CD8-positive, alpha-beta memory T cell (primary cell): ENCODE measurements at regions of chr21 and their contacts with region 1.

Region 1: DNA sequence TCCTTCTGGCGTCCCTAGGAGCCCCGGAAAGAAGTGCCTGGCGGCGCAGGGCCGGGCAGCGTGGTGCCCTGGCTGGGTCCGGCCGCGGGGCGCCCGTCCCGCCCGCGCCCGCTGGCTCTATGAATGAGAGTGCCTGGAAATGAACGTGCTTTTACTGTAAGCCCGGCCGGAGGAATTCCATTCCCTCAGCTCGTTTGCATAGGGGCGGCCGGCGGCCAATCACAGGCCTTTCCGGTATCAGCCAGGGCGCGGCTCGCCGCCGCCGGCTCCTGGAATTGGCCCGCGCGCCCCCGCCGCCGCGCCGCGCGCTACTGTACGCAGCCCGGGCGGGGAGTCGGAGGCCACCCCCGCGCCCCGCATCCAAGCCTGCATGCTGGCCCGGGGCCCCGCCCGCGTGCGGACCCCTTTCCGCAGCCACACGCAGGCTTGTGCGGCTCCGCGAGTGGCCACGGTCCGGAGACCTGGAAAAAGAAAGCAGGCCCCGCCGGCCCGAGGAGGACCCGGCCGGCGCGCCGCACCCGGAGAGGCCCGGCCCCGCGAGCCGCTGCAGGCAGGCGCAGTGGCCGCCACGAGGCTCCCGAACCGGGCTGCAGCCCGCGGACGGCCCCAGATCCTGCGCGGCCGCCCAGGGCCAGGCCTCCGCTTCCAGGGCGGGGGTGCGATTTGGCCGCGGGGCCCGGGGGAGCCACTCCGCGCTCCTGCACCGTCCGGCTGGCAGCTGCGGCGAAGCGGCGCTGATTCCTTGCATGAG is 160.4 kb downstream of the RUNX1 start:
- DNase-seq: peak; percentile 63 to 81 (median 74)
- H3K4me3 ChIP-seq: peak overlapping the region; percentile 78
- H3K4me3 Mint-ChIP-seq: peak overlapping the region; percentile 88 to 99 (median 95)
- H3K27ac ChIP-seq: peak overlapping the region; percentile 87
- H3K27ac Mint-ChIP-seq: peak overlapping the region; percentile 88 to 99 (median 98)
- H3K4me1 ChIP-seq: peaks cover 51% of the 10 kb centered on the region
- H3K4me1 Mint-ChIP-seq: peaks cover 44 to 68% (median 63%) of the 10 kb centered on the region in 3 donors
- H3K27me3 ChIP-seq: no peaks in the 10 kb centered on the region
- H3K27me3 Mint-ChIP-seq: peaks cover 0 to 7% of the 10 kb centered on the region in 2 donors

Region 2: GRCh38 chr21:34900376-34900775 is 11.6 kb after region 1 on chr21:
- CTCF ChIA-PET with region 1: interaction called, 12 read pairs
- POLR2A ChIA-PET with region 1: no interaction called
- DNase-seq: no peak
- H3K4me3 ChIP-seq: no peak overlapping the region
- H3K4me3 Mint-ChIP-seq: no peak overlapping the region
- H3K27ac ChIP-seq: no peak overlapping the region
- H3K27ac Mint-ChIP-seq: peak overlapping the region in 1 of 8 donors; percentile 50
- H3K4me1 ChIP-seq: no peaks in the 10 kb centered on the region
- H3K4me1 Mint-ChIP-seq: peaks cover 30 to 41% (median 32%) of the 10 kb centered on the region in 3 donors
- H3K27me3 ChIP-seq: no peaks in the 10 kb centered on the region
- H3K27me3 Mint-ChIP-seq: no peaks in the 10 kb centered on the region

Region 3: GRCh38 chr21:34986561-34987500 is 98.1 kb after region 1 on chr21:
- CTCF ChIA-PET with region 1: interaction called, 41 read pairs
- POLR2A ChIA-PET with region 1: interaction called, 11 read pairs
- DNase-seq: peak; percentile 22 to 83 (median 64)
- H3K4me3 ChIP-seq: peak overlapping the region; percentile 26
- H3K4me3 Mint-ChIP-seq: peak overlapping the region; percentile 51 to 84 (median 82)
- H3K27ac ChIP-seq: peak overlapping the region; percentile 8
- H3K27ac Mint-ChIP-seq: peak overlapping the region; percentile 82 to 99 (median 94)
- H3K4me1 ChIP-seq: peaks cover 94% of the 10 kb centered on the region
- H3K4me1 Mint-ChIP-seq: peaks cover 92 to 97% (median 96%) of the 10 kb centered on the region in 3 donors
- H3K27me3 ChIP-seq: no peaks in the 10 kb centered on the region
- H3K27me3 Mint-ChIP-seq: no peaks in the 10 kb centered on the region

Region 4: DNA sequence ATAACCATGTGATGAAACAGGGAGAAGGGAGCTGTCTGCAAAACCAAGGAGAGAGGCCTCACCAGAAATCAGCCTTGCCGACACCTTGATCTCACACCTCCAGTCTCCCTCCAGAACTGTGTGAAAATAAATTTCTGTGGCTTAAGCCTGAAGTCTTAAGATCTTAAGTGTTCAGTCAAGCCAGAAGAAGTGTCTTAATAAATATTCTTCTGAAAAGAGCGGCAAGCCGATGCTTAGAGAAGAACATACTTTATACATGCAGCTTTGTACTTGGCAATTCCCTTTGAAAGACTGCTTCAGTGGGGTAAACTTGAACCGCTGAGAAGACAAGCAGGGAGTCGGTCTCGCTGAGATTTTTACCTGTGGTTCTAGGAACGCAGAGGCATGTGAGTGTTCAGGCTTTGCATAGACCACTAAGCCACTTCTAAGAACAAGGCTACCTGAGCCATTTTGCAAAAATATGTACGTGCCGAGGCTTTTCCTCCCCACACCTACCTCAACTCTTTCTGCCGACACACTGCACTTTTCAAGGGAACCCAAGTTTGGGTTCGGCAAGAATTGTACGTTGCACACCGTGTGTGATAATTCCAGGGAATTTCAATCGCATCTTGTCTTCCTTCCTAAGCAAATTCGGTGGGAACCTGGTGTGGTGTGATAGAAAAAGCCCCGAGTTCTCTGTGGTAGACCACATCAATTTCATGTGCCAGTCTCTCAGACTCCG is 157.0 kb after region 1 on chr21:
- CTCF ChIA-PET with region 1: interaction called, 83 read pairs
- POLR2A ChIA-PET with region 1: interaction called, 21 read pairs
- DNase-seq: peak in 4 of 5 donors; percentile 46 to 87 (median 76)
- H3K4me3 ChIP-seq: peak overlapping the region; percentile 83
- H3K4me3 Mint-ChIP-seq: peak overlapping the region; percentile 92 to 98 (median 97)
- H3K27ac ChIP-seq: peak overlapping the region; percentile 78
- H3K27ac Mint-ChIP-seq: peak overlapping the region; percentile 92 to 98 (median 97)
- H3K4me1 ChIP-seq: peaks cover 68% of the 10 kb centered on the region
- H3K4me1 Mint-ChIP-seq: peaks cover 82 to 88% (median 88%) of the 10 kb centered on the region in 3 donors
- H3K27me3 ChIP-seq: no peaks in the 10 kb centered on the region
- H3K27me3 Mint-ChIP-seq: peaks cover 0 to 20% of the 10 kb centered on the region in 2 donors

Region 5: DNA sequence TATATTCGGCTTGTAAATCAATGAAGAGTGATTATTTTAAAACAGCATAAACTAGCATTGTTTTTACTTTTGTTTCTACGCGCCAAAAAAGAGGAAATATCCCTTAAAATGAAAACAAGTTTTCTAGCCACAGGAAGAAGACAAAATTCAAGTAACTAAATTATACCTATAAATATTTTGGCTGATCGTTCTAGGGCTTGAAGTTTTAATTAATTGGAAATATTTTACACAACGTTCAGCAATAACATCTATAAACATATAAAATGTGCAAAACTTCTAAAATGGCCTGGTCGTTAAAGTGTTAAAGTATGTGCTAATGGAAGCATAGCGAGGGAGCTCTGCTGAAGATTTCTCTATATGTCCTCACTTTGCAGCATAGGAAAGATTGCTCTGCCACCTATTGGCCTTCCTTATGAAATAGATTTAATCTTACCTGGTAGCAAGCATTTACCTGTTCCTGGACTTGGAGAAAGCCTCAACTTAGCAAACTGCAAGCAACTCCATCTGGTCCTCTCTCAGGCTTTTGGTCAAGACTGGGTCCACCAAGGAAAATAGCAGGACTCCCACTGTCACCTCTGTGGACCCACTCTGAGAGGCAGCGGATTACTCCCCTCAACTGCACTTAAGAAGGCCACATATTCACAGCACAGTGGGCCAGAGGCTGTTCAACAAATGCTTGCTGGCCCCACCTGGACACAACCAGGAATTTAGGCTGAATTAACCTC is 511.7 kb after region 1 on chr21:
- CTCF ChIA-PET with region 1: interaction called, 26 read pairs
- POLR2A ChIA-PET with region 1: interaction called, 3 read pairs
- DNase-seq: peak in 4 of 5 donors; percentile 8 to 56 (median 48)
- H3K4me3 ChIP-seq: no peak overlapping the region
- H3K4me3 Mint-ChIP-seq: no peak overlapping the region
- H3K27ac ChIP-seq: no peak overlapping the region
- H3K27ac Mint-ChIP-seq: no peak overlapping the region
- H3K4me1 ChIP-seq: no peaks in the 10 kb centered on the region
- H3K4me1 Mint-ChIP-seq: no peaks in the 10 kb centered on the region
- H3K27me3 ChIP-seq: no peaks in the 10 kb centered on the region
- H3K27me3 Mint-ChIP-seq: peaks cover 0 to 14% of the 10 kb centered on the region in 2 donors